ENCODE measurements at regions of chr9 and their contacts with region 1.

Region 1: DNA sequence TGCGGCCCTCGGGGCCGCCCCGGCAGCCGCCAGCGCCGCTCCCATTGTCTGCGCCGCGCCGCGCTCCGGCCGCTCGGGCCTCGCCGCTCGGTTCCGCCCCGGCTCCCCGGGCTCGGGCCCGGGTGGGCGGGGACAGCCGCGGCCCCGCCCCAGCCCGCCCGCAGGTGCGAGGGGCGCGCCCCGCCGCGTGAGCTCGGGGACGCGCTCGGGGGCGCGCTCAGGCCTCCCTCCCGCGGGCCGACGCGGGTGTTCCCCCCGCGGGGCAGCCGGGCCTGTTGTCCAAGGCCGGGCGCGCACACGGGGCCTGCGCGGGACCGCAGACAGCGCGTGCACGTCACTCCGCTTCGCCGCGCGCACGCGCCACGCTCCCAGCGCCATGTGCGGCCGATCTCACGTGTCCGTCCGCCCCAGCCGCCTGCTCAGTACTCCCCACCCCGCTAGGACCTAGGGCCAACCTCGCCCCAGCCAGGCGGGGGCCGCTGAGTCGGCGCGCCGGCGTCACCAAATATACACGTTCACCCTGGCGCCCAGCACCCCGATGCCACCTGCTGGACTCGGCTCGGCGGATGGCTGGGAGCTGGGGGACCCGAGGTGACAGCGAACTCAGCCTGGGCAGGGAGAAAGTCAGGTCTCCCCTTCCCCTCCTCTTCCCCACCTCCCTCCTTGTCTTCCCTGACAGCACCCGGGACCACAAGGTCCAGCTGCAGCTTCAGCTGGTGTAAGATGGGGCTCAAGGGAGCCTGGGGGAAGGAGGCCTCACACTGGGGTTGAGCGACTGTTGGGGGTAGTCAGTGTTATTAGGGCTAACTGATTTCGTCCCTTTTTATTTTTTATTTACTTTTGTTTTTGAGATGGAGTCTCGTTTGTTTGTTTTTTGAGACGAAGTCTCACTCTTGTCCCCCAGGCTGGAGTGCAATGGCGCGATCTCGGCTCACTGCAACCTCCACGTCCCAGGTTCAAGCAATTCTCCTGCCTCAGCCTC is 14.3 kb downstream of the GBGT1 start:
- DNase-seq: peak; percentile 92
- H3K4me3 ChIP-seq: peak overlapping the region in 2 of 3 experiments; percentile 49 to 68
- H3K27ac ChIP-seq: peak overlapping the region; percentile 14
- H3K4me1 ChIP-seq: peaks cover 11% of the 10 kb centered on the region
- H3K27me3 ChIP-seq: no peaks in the 10 kb centered on the region
- CTCF ChIP-seq: peak in 1 of 2 donors; percentile 11
- POLR2A ChIP-seq: peak; percentile 32

Region 2: GRCh38 chr9:133048569-133048968 is 100.8 kb before region 1 on chr9:
- CTCF ChIA-PET with region 1: interaction called, 25 read pairs
- POLR2A ChIA-PET with region 1: interaction called, 3 read pairs
- dilution Hi-C with region 1: no loop called
- intact Hi-C with region 1: loop called (anchors 1 kb)
- DNase-seq: peak; percentile 12
- H3K4me3 ChIP-seq: no peak overlapping the region
- H3K27ac ChIP-seq: no peak overlapping the region
- H3K4me1 ChIP-seq: no peaks in the 10 kb centered on the region
- H3K27me3 ChIP-seq: no peaks in the 10 kb centered on the region
- CTCF ChIP-seq: peak in 1 of 2 donors; percentile 41
- POLR2A ChIP-seq: no peak

Region 3: GRCh38 chr9:133108794-133109641 is 40.4 kb before region 1 on chr9:
- CTCF ChIA-PET with region 1: interaction called, 147 read pairs
- POLR2A ChIA-PET with region 1: interaction called, 3 read pairs
- dilution Hi-C with region 1: no loop called
- intact Hi-C with region 1: no loop called
- DNase-seq: no peak
- H3K4me3 ChIP-seq: no peak overlapping the region
- H3K27ac ChIP-seq: no peak overlapping the region
- H3K4me1 ChIP-seq: peaks cover 11% of the 10 kb centered on the region
- H3K27me3 ChIP-seq: no peaks in the 10 kb centered on the region
- CTCF ChIP-seq: no peak
- POLR2A ChIP-seq: no peak